Naive thymus-derived CD4-positive, alpha-beta T cell (primary cell): ENCODE measurements at regions of chr1 and their contacts with region 1.

Region 1: GRCh38 chr1:29181413-29182225 is at the start of gene SRSF4:
- DNase-seq: peak; percentile 96 to 99 (median 99)
- ATAC-seq: peak; percentile 97
- H3K4me3 ChIP-seq: peak within 1 kb of the TSS; percentile 99
- H3K4me3 Mint-ChIP-seq: peak within 1 kb of the TSS; percentile 88 to 98 (median 94)
- H3K27ac ChIP-seq: peak within 1 kb of the TSS; percentile 98
- H3K27ac Mint-ChIP-seq: peak within 1 kb of the TSS; percentile 88 to 98 (median 94)
- H3K4me1 ChIP-seq: peaks cover 26 to 29% of the 10 kb centered on the region in 2 donors
- H3K4me1 Mint-ChIP-seq: peaks cover 32 to 56% (median 50%) of the 10 kb centered on the region in 7 donors
- H3K27me3 ChIP-seq: no peaks in the 10 kb centered on the region
- H3K27me3 Mint-ChIP-seq: no peaks in the 10 kb centered on the region
- total RNA-seq, gene SRSF4: 77.6 to 110 (median 79.9) TPM

Region 2: DNA sequence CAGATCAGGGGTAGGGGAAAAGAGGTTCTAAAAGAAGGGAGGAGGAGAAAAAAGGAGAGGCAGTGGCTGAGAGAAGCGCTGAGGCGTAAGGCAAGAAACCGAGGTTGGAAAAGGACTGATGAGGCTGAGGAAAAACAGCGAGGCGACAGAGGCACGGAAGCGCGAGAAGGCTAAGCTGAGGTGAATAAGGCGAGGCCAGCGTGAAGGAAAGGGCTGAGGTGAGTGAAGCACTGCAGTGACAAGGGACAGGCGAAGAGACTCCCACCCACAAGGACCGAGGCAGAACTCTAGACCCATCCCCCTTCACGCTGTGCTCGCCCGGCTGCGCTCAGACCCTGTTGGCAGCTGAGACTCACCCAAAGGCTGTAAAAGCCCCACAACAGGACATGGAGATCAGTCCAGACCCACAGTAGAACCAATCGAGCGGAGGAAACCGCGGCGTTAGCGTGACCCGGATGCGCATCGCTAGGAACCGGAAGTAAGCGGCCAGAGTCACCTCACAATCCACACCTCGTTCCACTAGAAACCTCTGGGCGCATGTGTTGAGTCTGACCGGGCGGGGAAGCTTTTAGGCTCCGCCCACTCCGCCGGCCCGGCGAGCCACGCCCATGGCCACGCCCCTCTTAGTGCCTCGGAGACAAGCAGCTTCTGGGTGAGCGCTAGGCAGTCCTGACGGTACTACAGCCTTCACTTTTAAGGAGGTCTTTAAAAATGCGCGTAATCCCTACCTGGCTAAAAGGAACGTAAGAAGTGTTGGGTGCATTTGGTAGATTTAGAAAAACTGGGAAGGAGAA is 1093.3 kb before region 1 on chr1 and contains the start of gene EYA3:
- CTCF ChIA-PET with region 1: no interaction called
- POLR2A ChIA-PET with region 1: interaction called, 3 read pairs
- intact Hi-C with region 1: loop called in 1 of 2 experiments (anchors 5 kb)
- DNase-seq: peak; percentile 96 to 99 (median 99)
- ATAC-seq: peak; percentile 99
- H3K4me3 ChIP-seq: peak within 1 kb of the TSS; percentile 92
- H3K4me3 Mint-ChIP-seq: peak within 1 kb of the TSS; percentile 93 to 98 (median 97)
- H3K27ac ChIP-seq: peak within 1 kb of the TSS; percentile 82
- H3K27ac Mint-ChIP-seq: peak within 1 kb of the TSS; percentile 89 to 98 (median 94)
- H3K4me1 ChIP-seq: peaks cover 11 to 12% of the 10 kb centered on the region in 2 donors
- H3K4me1 Mint-ChIP-seq: peaks cover 30 to 56% (median 42%) of the 10 kb centered on the region in 7 donors
- H3K27me3 ChIP-seq: no peaks in the 10 kb centered on the region
- H3K27me3 Mint-ChIP-seq: peaks cover 0 to 8% (median 0%) of the 10 kb centered on the region in 5 donors
- total RNA-seq, gene EYA3: 14.5 to 31.7 (median 19.2) TPM

Region 3: GRCh38 chr1:28466226-28466778 is 715.3 kb before region 1 on chr1:
- CTCF ChIA-PET with region 1: no interaction called
- POLR2A ChIA-PET with region 1: no interaction called
- intact Hi-C with region 1: no loop called
- DNase-seq: no peak
- ATAC-seq: no peak
- H3K4me3 ChIP-seq: no peak overlapping the region
- H3K4me3 Mint-ChIP-seq: no peak overlapping the region
- H3K27ac ChIP-seq: no peak overlapping the region
- H3K27ac Mint-ChIP-seq: no peak overlapping the region
- H3K4me1 ChIP-seq: no peaks in the 10 kb centered on the region
- H3K4me1 Mint-ChIP-seq: peaks cover 0 to 22% (median 0%) of the 10 kb centered on the region in 7 donors
- H3K27me3 ChIP-seq: no peaks in the 10 kb centered on the region
- H3K27me3 Mint-ChIP-seq: no peaks in the 10 kb centered on the region

Region 4: DNA sequence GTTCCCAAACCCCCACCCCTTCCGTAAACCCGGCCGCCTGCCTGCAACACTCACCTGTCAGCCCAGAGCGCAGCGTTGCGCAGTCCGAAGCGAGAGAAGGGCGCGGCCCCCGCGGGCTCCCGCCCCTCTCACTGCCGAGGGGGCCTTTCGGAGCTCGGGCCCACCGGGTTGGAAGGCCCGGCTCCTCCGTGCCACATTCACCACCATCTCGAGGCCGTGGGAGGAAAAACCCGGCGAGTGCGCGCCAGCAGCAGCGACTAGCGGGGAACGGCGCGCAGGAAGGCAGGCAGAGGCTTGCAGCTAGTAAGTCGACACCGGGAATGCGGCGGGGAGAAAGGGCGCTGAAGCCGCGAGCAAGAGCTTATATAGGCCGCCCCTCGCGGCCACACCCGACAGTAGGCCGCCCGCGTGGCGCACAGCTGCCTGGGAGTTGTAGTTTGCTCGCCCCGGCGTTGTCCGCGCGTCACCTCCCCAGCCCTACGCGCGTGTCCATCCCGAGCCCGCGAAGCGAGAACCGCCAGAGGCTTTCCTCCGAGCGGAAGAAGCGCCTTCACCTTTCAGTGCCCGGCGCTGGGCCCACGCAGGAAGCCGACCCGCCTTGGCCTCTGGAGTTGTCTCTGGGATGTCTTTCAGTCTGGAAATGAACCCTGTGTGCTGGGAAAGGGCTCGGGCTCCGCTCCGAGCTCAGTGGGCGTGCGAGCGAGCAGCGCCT is 599.9 kb before region 1 on chr1:
- CTCF ChIA-PET with region 1: no interaction called
- POLR2A ChIA-PET with region 1: interaction called, 16 read pairs
- intact Hi-C with region 1: loop called in 1 of 2 experiments (anchors 5 kb)
- DNase-seq: peak; percentile 85 to 96 (median 91)
- ATAC-seq: peak; percentile 95
- H3K4me3 ChIP-seq: peak overlapping the region; percentile 93
- H3K4me3 Mint-ChIP-seq: peak overlapping the region; percentile 94 to 99 (median 97)
- H3K27ac ChIP-seq: peak overlapping the region; percentile 84
- H3K27ac Mint-ChIP-seq: peak overlapping the region; percentile 86 to 96 (median 93)
- H3K4me1 ChIP-seq: peaks cover 20 to 23% of the 10 kb centered on the region in 2 donors
- H3K4me1 Mint-ChIP-seq: peaks cover 22 to 48% (median 37%) of the 10 kb centered on the region in 7 donors
- H3K27me3 ChIP-seq: no peaks in the 10 kb centered on the region
- H3K27me3 Mint-ChIP-seq: no peaks in the 10 kb centered on the region

Region 5: DNA sequence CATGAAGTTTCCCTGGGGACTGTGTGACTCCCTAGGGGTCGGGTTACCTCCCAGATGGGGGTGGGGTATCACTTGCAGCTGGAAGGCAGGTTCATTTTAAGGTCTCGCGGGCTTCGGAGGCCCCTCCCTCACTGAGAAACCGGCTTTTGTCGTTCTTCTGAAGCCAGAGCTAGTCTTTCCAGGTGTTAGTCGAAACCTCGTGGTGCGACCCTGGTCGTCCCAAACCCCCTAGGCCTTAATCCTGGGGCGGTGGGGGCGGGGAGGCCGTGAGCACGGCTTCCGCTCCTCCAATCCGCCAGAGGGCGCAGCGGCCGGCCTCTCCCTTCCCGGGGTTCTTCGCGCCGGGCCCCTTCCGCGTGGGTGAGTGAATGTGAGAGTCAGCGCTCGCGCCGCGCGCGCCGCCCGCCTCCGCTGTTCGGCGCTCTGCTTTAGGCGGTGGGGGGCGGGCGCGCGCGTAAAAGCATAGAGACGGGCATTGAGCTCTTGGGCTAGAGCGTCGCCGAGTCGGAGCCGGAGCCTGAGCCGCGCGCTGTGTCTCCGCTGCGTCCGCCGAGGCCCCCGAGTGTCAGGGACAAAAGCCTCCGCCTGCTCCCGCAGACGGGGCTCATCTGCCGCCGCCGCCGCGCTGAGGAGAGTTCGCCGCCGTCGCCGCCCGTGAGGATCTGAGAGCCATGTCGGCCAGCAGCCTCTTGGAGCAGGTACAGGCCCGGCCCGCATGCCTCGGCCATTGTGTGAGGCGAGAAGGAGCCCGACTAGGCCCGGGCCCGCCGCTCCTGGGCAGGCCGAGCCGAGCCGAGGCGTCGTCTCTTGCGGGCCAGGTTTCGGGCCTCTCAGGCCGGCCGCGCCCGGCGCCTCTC is 444.9 kb before region 1 on chr1 and contains the start of gene YTHDF2:
- CTCF ChIA-PET with region 1: no interaction called
- POLR2A ChIA-PET with region 1: interaction called, 14 read pairs
- intact Hi-C with region 1: loop called (anchors 1 kb)
- DNase-seq: peak; percentile 95 to 98 (median 98)
- ATAC-seq: peak; percentile 97
- H3K4me3 ChIP-seq: peak within 1 kb of the TSS; percentile 88
- H3K4me3 Mint-ChIP-seq: peak within 1 kb of the TSS; percentile 92 to 100 (median 98)
- H3K27ac ChIP-seq: peak within 1 kb of the TSS; percentile 92
- H3K27ac Mint-ChIP-seq: peak within 1 kb of the TSS; percentile 93 to 98 (median 95)
- H3K4me1 ChIP-seq: peaks cover 26% of the 10 kb centered on the region in 2 donors
- H3K4me1 Mint-ChIP-seq: peaks cover 15 to 49% (median 34%) of the 10 kb centered on the region in 7 donors
- H3K27me3 ChIP-seq: no peaks in the 10 kb centered on the region
- H3K27me3 Mint-ChIP-seq: no peaks in the 10 kb centered on the region
- total RNA-seq, gene YTHDF2: 64.5 to 72.0 (median 71.5) TPM

Region 6: DNA sequence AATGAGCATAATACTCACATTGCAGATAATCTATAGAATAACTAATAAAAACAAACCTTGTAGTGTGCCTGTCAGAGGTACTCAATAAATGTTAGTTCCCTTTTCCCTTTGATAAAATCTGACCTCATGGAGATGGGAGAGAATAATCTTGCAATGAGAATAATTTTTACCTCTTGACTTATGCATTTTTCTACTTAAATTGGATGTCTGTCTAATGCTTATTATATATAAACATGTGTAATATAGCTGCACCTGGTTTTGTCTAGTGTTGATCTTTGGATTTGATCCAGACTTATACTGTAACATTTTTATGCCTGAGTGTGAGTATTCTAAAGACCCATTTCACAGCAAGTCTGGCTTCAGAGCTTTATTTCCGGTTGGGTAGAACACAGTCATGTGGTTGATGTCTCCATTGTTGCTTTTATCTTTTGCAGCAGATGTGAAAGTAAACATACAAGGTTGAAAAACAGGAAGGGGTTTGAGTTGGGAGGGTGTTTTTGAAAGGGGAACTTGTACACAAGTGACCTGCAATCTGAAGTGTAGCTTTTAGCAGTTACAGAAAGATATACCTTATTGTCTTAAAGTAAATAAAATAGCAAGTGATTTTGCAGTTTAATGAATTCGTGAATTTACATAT is 254.9 kb before region 1 on chr1:
- CTCF ChIA-PET with region 1: no interaction called
- POLR2A ChIA-PET with region 1: no interaction called
- intact Hi-C with region 1: loop called in 1 of 2 experiments (anchors 5 kb)
- DNase-seq: peak in 7 of 9 donors; percentile 61 to 85 (median 80)
- ATAC-seq: peak; percentile 93
- H3K4me3 ChIP-seq: peak overlapping the region; percentile 24
- H3K4me3 Mint-ChIP-seq: peak overlapping the region; percentile 54 to 91 (median 76)
- H3K27ac ChIP-seq: peak overlapping the region; percentile 69
- H3K27ac Mint-ChIP-seq: peak overlapping the region; percentile 65 to 98 (median 91)
- H3K4me1 ChIP-seq: peaks cover 53 to 54% of the 10 kb centered on the region in 2 donors
- H3K4me1 Mint-ChIP-seq: peaks cover 46 to 85% (median 55%) of the 10 kb centered on the region in 7 donors
- H3K27me3 ChIP-seq: no peaks in the 10 kb centered on the region
- H3K27me3 Mint-ChIP-seq: no peaks in the 10 kb centered on the region

Region 7: GRCh38 chr1:29197585-29197924 is 15.9 kb after region 1 on chr1:
- CTCF ChIA-PET with region 1: interaction called, 46 read pairs
- POLR2A ChIA-PET with region 1: interaction called, 15 read pairs
- intact Hi-C with region 1: loop called (anchors 1 to 2 kb)
- DNase-seq: peak in 7 of 9 donors; percentile 11 to 53 (median 34)
- ATAC-seq: peak; percentile 80
- H3K4me3 ChIP-seq: no peak overlapping the region
- H3K4me3 Mint-ChIP-seq: no peak overlapping the region
- H3K27ac ChIP-seq: no peak overlapping the region
- H3K27ac Mint-ChIP-seq: no peak overlapping the region
- H3K4me1 ChIP-seq: no peaks in the 10 kb centered on the region
- H3K4me1 Mint-ChIP-seq: peaks cover 0 to 11% (median 0%) of the 10 kb centered on the region in 7 donors
- H3K27me3 ChIP-seq: no peaks in the 10 kb centered on the region
- H3K27me3 Mint-ChIP-seq: no peaks in the 10 kb centered on the region

Region 8: DNA sequence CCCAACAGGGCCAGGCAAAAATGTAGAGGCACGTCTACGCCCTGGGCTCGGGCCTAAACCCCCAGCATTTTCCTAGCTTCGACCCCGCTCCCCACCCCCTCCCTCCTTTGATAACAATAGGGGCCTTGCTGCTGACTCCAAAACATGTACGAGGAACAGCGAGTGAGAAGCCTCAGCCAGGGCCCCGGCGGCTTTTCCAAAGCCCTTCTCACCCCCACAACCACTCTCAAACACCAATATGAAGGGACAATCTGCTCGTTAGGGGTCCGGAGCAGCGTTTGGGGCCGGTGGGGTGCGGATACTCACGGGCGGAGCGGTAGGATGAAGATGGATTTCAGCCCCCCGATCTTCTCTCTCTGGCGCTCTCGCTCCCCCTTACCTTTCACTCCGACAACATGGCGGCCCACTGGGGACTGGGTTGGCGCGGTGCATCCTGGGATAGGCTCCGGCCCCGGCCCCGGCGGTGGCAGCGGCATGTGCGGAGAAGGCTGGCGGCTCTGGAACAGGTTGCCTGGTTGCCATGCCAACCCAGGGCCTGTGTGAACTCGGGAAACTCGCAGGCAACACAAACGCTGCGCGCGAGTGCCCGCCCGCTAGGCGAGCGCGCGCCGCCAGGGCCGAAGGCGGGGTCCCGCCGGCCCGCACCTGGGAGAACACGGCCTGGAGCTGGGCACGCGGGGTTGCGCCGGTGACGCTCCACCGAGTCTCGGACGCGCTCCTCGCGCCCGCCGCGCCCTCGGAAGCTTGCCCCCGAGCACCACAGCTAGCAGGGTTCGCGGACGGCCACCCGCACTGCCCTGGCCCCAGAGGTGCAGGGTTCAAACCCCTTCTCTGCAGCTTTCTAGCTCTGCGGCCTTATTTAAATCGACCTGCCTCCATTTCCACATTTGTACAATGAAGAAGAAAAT is 1883.9 kb after region 1 on chr1 and contains the start of gene PUM1:
- CTCF ChIA-PET with region 1: no interaction called
- POLR2A ChIA-PET with region 1: interaction called, 3 read pairs
- intact Hi-C with region 1: loop called in 1 of 2 experiments (anchors 10 kb)
- DNase-seq: peak; percentile 95 to 99 (median 97)
- ATAC-seq: peak; percentile 99
- H3K4me3 ChIP-seq: peak within 1 kb of the TSS; percentile 97
- H3K4me3 Mint-ChIP-seq: peak within 1 kb of the TSS; percentile 96 to 100 (median 98)
- H3K27ac ChIP-seq: peak within 1 kb of the TSS; percentile 95
- H3K27ac Mint-ChIP-seq: peak within 1 kb of the TSS; percentile 97 to 99 (median 98)
- H3K4me1 ChIP-seq: peaks cover 10 to 18% of the 10 kb centered on the region in 2 donors
- H3K4me1 Mint-ChIP-seq: peaks cover 20 to 38% (median 29%) of the 10 kb centered on the region in 7 donors
- H3K27me3 ChIP-seq: no peaks in the 10 kb centered on the region
- H3K27me3 Mint-ChIP-seq: no peaks in the 10 kb centered on the region
- total RNA-seq, gene PUM1: 114 to 226 (median 174) TPM